GM12878 (cell line): ENCODE measurements at regions of chr5 and their contacts with region 1.

Region 1: GRCh38 chr5:52799983-52800393 is 12.3 kb downstream of the ITGA1 start:
- DNase-seq: peak; percentile 83
- ATAC-seq: peak; percentile 93
- H3K4me3 ChIP-seq: peak overlapping the region; percentile 90
- H3K27ac ChIP-seq: peak overlapping the region; percentile 87
- H3K4me1 ChIP-seq: peaks cover 3% of the 10 kb centered on the region; the same call in 1 of the 2 replicates
- H3K27me3 ChIP-seq: no peaks in the 10 kb centered on the region
- CTCF ChIP-seq: no peak
- EP300 ChIP-seq: no peak
- POLR2A ChIP-seq: peak; percentile 77
- RAD21 ChIP-seq: no peak

Region 2: GRCh38 chr5:52787600-52788504 is 12.1 kb before region 1 on chr5 and contains the starts of genes ITGA1 and PELO:
- CTCF ChIA-PET with region 1: interaction called, 10 read pairs
- POLR2A ChIA-PET with region 1: interaction called, 8 read pairs
- RAD21 ChIA-PET with region 1: interaction called, 7 read pairs
- SMC1A ChIA-PET with region 1: interaction called, 9 read pairs
- in situ Hi-C with region 1: no loop called
- intact Hi-C with region 1: no loop called
- DNase-seq: no peak
- ATAC-seq: peak; percentile 88
- H3K4me3 ChIP-seq: peak within 1 kb of the TSS; percentile 76
- H3K27ac ChIP-seq: no peak within 1 kb of the TSS
- H3K4me1 ChIP-seq: no peaks in the 10 kb centered on the region; the same call in 1 of the 2 replicates
- H3K27me3 ChIP-seq: peaks cover 7 to 11% of the 10 kb centered on the region in 2 experiments; a peak in 3 of 4 replicates
- CTCF ChIP-seq: peak in 1 of 3 experiments; percentile 34; a peak in 2 of 6 replicates
- EP300 ChIP-seq: peak in 1 of 2 experiments; percentile 50; a peak in 1 of 4 replicates
- POLR2A ChIP-seq: no peak
- RAD21 ChIP-seq: no peak
- polyA plus RNA-seq, gene ITGA1: 0.02 to 0.04 TPM
- polyA plus RNA-seq, gene PELO: 6.0 to 6.3 TPM

Region 3: GRCh38 chr5:52811067-52811749 is 11.2 kb after region 1 on chr5:
- CTCF ChIA-PET with region 1: interaction called, 5 read pairs
- POLR2A ChIA-PET with region 1: interaction called, 4 read pairs
- RAD21 ChIA-PET with region 1: no interaction called
- SMC1A ChIA-PET with region 1: interaction called, 13 read pairs
- in situ Hi-C with region 1: no loop called
- intact Hi-C with region 1: no loop called
- DNase-seq: no peak
- ATAC-seq: no peak
- H3K4me3 ChIP-seq: no peak overlapping the region
- H3K27ac ChIP-seq: no peak overlapping the region
- H3K4me1 ChIP-seq: no peaks in the 10 kb centered on the region
- H3K27me3 ChIP-seq: no peaks in the 10 kb centered on the region
- CTCF ChIP-seq: no peak
- EP300 ChIP-seq: no peak
- POLR2A ChIP-seq: no peak
- RAD21 ChIP-seq: no peak